ENCODE measurements at regions of chr13 and their contacts with region 1.

Region 1: DNA sequence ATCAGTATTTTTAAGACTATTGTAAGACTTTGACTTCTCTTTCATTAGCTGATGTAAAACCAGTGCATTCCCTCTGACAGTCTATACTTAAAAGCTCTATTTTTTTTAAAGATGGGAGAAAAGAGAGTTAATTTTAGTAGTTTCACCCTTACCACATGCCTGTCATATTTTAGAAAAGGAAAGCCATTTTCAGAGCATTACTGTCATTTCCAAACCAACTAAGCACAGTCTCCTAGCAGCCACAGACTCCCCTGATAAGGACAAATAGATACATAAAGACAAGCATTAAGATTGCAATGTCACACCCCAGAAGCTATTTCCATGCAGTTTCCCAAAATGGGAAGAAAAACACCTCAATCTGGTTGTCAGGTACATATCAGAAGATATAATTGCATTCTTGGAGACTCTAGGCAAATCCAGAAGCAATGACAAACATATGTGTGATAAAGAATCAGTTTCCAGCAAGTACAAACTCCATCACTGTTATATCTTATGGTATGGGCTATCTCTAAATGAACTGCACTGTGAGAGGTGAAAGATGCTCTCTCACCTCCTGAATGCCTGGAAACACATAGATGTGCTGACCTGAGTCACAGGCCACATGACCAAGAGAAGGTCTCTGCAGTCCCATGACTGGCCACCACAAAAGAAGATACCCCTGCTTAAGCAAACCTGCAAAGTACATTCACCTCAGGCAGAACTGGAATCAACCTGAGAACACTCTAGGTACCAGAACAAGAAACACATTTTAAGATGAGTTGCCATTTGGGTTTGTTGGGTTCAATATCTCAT is 303.3 kb downstream of the POU4F1 start:
- DNase-seq: no peak
- H3K4me3 ChIP-seq: no peak overlapping the region
- H3K4me3 Mint-ChIP-seq: no peak overlapping the region
- H3K27ac Mint-ChIP-seq: no peak overlapping the region
- H3K4me1 ChIP-seq: no peaks in the 10 kb centered on the region
- H3K4me1 Mint-ChIP-seq: no peaks in the 10 kb centered on the region
- H3K27me3 ChIP-seq: no peaks in the 10 kb centered on the region
- H3K27me3 Mint-ChIP-seq: no peaks in the 10 kb centered on the region
- CTCF ChIP-seq: no peak

Region 2: GRCh38 chr13:78241278-78241919 is 58.6 kb before region 1 on chr13:
- CTCF ChIA-PET with region 1: no interaction called
- POLR2A ChIA-PET with region 1: no interaction called
- intact Hi-C with region 1: loop called (anchors 1 kb)
- DNase-seq: peak; percentile 41 to 56
- H3K4me3 ChIP-seq: no peak overlapping the region
- H3K4me3 Mint-ChIP-seq: no peak overlapping the region
- H3K27ac Mint-ChIP-seq: no peak overlapping the region
- H3K4me1 ChIP-seq: no peaks in the 10 kb centered on the region
- H3K4me1 Mint-ChIP-seq: peaks cover 7% of the 10 kb centered on the region
- H3K27me3 ChIP-seq: no peaks in the 10 kb centered on the region
- H3K27me3 Mint-ChIP-seq: peaks cover 3% of the 10 kb centered on the region
- CTCF ChIP-seq: peak; percentile 80 to 86

Region 3: DNA sequence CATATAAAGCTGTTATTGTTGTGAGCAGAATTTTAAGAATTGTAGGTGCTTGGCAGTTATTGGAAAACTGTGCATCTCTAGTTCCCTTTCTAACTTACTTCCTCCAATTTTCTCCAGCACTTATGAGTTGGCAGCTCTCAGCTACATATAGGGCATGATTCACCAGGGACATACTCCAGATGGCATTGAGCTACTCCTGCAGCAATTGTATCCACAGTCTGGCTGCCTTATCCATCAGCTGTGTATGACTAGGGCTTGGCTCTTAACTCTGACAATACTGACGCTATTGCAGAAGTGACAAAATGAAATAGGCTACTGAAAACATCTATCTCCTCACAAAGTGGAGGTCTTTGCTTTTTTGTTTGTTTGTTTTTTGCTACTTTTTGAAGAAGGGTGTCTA is 26.6 kb after region 1 on chr13:
- CTCF ChIA-PET with region 1: no interaction called
- POLR2A ChIA-PET with region 1: interaction called, 11 read pairs
- intact Hi-C with region 1: no loop called
- DNase-seq: no peak
- H3K4me3 ChIP-seq: no peak overlapping the region
- H3K4me3 Mint-ChIP-seq: no peak overlapping the region
- H3K27ac Mint-ChIP-seq: no peak overlapping the region
- H3K4me1 ChIP-seq: no peaks in the 10 kb centered on the region
- H3K4me1 Mint-ChIP-seq: no peaks in the 10 kb centered on the region
- H3K27me3 ChIP-seq: no peaks in the 10 kb centered on the region
- H3K27me3 Mint-ChIP-seq: peaks cover 12% of the 10 kb centered on the region
- CTCF ChIP-seq: no peak

Measured in Caco-2 (cell line).